ENCODE measurements at regions of chr17 and their contacts with region 1.

Region 1: GRCh38 chr17:35486920-35487732 is 38.6 kb upstream of the SLFN13 start:
- DNase-seq: peak; percentile 73
- ATAC-seq: peak; percentile 69

Region 2: DNA sequence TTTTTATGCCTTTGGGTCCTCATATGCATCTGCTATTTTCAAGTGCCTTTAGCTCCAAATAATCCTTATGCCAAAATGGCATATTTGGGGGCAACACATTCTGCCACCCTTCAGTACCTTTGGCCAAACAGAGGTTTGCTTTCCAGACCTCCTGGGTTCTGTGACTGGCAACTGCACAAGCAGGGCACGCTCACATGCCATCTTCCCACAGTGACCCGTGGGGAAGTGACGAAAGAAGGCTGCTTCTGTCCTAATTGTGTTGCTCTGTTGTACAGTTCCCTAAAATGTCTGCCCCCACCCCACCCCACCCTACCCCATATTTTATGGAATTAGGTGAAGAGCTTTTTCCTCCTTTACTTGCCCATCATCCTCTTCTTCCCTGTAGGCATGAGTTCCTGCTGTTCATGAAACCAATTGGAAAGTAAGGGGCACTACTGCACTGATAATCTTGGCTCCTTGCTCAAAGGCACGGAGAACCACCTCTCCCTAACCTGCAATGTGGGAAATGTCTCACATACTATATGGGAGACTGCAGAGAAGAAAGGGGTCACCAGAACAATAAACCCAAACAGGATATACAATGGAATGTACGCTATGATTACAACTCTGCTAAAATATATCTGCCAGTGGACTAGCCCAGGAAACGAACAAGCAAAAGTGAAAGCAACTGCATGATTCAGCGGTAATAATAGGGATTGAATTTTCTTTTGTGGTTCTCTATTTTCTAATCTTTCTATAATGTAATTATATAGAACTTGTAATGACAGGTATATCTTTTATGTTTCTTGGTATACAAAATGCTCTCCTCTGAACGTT is 53.7 kb after region 1 on chr17:
- intact Hi-C with region 1: loop called (anchors 10 kb)
- DNase-seq: peak; percentile 53
- ATAC-seq: peak; percentile 48

Measured in Right ventricle myocardium superior (tissue), 1 donor.